Activated naive CD4-positive, alpha-beta T cell treated with anti-CD3 and anti-CD28 coated beads, Interleukin-2, amount 10 ng/mL, durations not matched to agents 7 days and 5 days (primary cell): ENCODE measurements at regions of chr5 and their contacts with region 1.

Region 1: GRCh38 chr5:35777358-35778087 is 79.2 kb upstream of the IL7R start:
- DNase-seq: peak; percentile 82
- H3K4me3 Mint-ChIP-seq: no peak overlapping the region
- H3K27ac Mint-ChIP-seq: peak overlapping the region; percentile 55
- H3K4me1 Mint-ChIP-seq: peaks cover 66% of the 10 kb centered on the region
- H3K27me3 Mint-ChIP-seq: no peaks in the 10 kb centered on the region

Region 2: GRCh38 chr5:35533156-35533555 is 244.4 kb before region 1 on chr5:
- CTCF ChIA-PET with region 1: no interaction called
- DNase-seq: no peak
- H3K4me3 Mint-ChIP-seq: no peak overlapping the region
- H3K27ac Mint-ChIP-seq: no peak overlapping the region
- H3K4me1 Mint-ChIP-seq: no peaks in the 10 kb centered on the region
- H3K27me3 Mint-ChIP-seq: peaks cover 4% of the 10 kb centered on the region

Region 3: GRCh38 chr5:35617435-35618303 is 159.9 kb before region 1 on chr5 and contains the start of gene SPEF2:
- CTCF ChIA-PET with region 1: interaction called, 10 read pairs
- DNase-seq: peak; percentile 84
- H3K4me3 Mint-ChIP-seq: peak within 1 kb of the TSS; percentile 92
- H3K27ac Mint-ChIP-seq: peak within 1 kb of the TSS; percentile 90
- H3K4me1 Mint-ChIP-seq: peaks cover 27% of the 10 kb centered on the region
- H3K27me3 Mint-ChIP-seq: peaks cover 7% of the 10 kb centered on the region

Region 4: GRCh38 chr5:35651002-35651756 is 126.3 kb before region 1 on chr5:
- CTCF ChIA-PET with region 1: interaction called, 47 read pairs
- DNase-seq: peak; percentile 78
- H3K4me3 Mint-ChIP-seq: no peak overlapping the region
- H3K27ac Mint-ChIP-seq: no peak overlapping the region
- H3K4me1 Mint-ChIP-seq: no peaks in the 10 kb centered on the region
- H3K27me3 Mint-ChIP-seq: no peaks in the 10 kb centered on the region

Region 5: GRCh38 chr5:35794684-35795375 is 17.3 kb after region 1 on chr5:
- CTCF ChIA-PET with region 1: interaction called, 15 read pairs
- DNase-seq: no peak
- H3K4me3 Mint-ChIP-seq: no peak overlapping the region
- H3K27ac Mint-ChIP-seq: peak overlapping the region; percentile 81
- H3K4me1 Mint-ChIP-seq: peaks cover 88% of the 10 kb centered on the region
- H3K27me3 Mint-ChIP-seq: no peaks in the 10 kb centered on the region

Region 6: GRCh38 chr5:35811108-35811741 is 33.7 kb after region 1 on chr5:
- CTCF ChIA-PET with region 1: interaction called, 28 read pairs
- DNase-seq: peak; percentile 69
- H3K4me3 Mint-ChIP-seq: peak overlapping the region; percentile 35
- H3K27ac Mint-ChIP-seq: peak overlapping the region; percentile 92
- H3K4me1 Mint-ChIP-seq: peaks cover 66% of the 10 kb centered on the region
- H3K27me3 Mint-ChIP-seq: no peaks in the 10 kb centered on the region

Region 7: DNA sequence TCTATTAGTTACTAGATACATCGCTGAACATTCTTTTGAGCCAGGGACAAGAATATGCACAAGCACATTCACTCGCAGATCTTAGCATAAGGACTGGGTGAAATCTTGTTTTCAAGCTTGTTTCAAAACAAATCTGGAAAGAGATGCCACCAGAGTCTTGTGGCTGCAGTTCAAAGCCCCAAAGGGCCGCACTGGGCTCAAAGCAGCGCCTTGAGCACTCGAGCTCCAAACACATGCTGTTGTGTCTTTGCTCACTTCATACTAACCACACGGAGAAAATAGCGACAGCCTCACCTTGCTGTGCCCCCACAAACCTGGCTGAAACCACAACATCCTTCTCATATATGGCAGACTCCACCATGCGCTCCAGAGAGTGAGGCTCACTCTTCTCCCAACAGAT is 45.0 kb after region 1 on chr5:
- CTCF ChIA-PET with region 1: interaction called, 19 read pairs
- DNase-seq: peak; percentile 78
- H3K4me3 Mint-ChIP-seq: peak overlapping the region; percentile 39
- H3K27ac Mint-ChIP-seq: peak overlapping the region; percentile 86
- H3K4me1 Mint-ChIP-seq: peaks cover 88% of the 10 kb centered on the region
- H3K27me3 Mint-ChIP-seq: no peaks in the 10 kb centered on the region

Region 8: DNA sequence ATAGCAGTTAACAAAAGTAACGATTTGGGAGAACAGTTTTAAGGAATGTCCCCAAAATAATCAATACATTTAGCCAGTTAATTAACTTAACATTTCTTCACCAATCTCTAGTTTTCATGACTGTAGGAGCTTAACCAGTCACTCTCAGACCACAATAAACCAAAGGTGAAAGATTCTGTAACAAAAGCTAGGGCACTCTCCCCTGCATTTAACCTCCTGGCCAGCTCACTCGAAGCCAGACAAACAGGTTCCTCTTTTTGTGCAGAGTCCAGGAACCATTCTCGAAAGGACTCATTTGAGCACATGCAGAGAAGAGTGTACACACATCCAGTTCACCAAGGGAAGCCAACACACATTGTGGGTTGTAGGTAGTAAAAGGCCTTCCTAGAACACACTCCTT is 85.6 kb after region 1 on chr5:
- CTCF ChIA-PET with region 1: interaction called, 21 read pairs
- DNase-seq: peak; percentile 45
- H3K4me3 Mint-ChIP-seq: peak overlapping the region; percentile 90
- H3K27ac Mint-ChIP-seq: peak overlapping the region; percentile 88
- H3K4me1 Mint-ChIP-seq: peaks cover 76% of the 10 kb centered on the region
- H3K27me3 Mint-ChIP-seq: no peaks in the 10 kb centered on the region

Region 9: GRCh38 chr5:35938568-35939227 is 161.2 kb after region 1 on chr5 and contains the start of gene CAPSL:
- CTCF ChIA-PET with region 1: no interaction called
- DNase-seq: no peak
- H3K4me3 Mint-ChIP-seq: no peak within 1 kb of the TSS
- H3K27ac Mint-ChIP-seq: no peak within 1 kb of the TSS
- H3K4me1 Mint-ChIP-seq: no peaks in the 10 kb centered on the region
- H3K27me3 Mint-ChIP-seq: peaks cover 18% of the 10 kb centered on the region

Region 10: GRCh38 chr5:36073595-36074216 is 296.2 kb after region 1 on chr5:
- CTCF ChIA-PET with region 1: no interaction called
- DNase-seq: peak; percentile 29
- H3K4me3 Mint-ChIP-seq: no peak overlapping the region
- H3K27ac Mint-ChIP-seq: no peak overlapping the region
- H3K4me1 Mint-ChIP-seq: peaks cover 9% of the 10 kb centered on the region
- H3K27me3 Mint-ChIP-seq: peaks cover 16% of the 10 kb centered on the region